ENCODE measurements at regions of chr21 and their contacts with region 1.

Region 1: GRCh38 chr21:16419188-16419921 is 689.6 kb downstream of the USP25 start:
- DNase-seq: peak; percentile 99
- H3K4me3 ChIP-seq: peak overlapping the region; percentile 34 to 100 (median 57)
- H3K27ac ChIP-seq: peak overlapping the region; percentile 85
- H3K4me1 ChIP-seq: peaks cover 26% of the 10 kb centered on the region
- H3K27me3 ChIP-seq: no peaks in the 10 kb centered on the region
- CTCF ChIP-seq: no peak
- POLR2A ChIP-seq: peak; percentile 76

Region 2: GRCh38 chr21:15848632-15849031 is 570.7 kb before region 1 on chr21:
- CTCF ChIA-PET with region 1: no interaction called
- POLR2A ChIA-PET with region 1: no interaction called
- dilution Hi-C with region 1: no loop called
- intact Hi-C with region 1: loop called (anchors 2 kb)
- DNase-seq: peak; percentile 92
- H3K4me3 ChIP-seq: no peak overlapping the region
- H3K27ac ChIP-seq: peak overlapping the region; percentile 69
- H3K4me1 ChIP-seq: peaks cover 56% of the 10 kb centered on the region
- H3K27me3 ChIP-seq: no peaks in the 10 kb centered on the region
- CTCF ChIP-seq: no peak
- POLR2A ChIP-seq: peak; percentile 48

Region 3: GRCh38 chr21:16082038-16082816 is 337.1 kb before region 1 on chr21:
- CTCF ChIA-PET with region 1: interaction called, 10 read pairs
- POLR2A ChIA-PET with region 1: no interaction called
- dilution Hi-C with region 1: no loop called
- intact Hi-C with region 1: loop called (anchors 2 kb)
- DNase-seq: peak; percentile 78
- H3K4me3 ChIP-seq: no peak overlapping the region
- H3K27ac ChIP-seq: peak overlapping the region; percentile 48
- H3K4me1 ChIP-seq: peaks cover 8% of the 10 kb centered on the region
- H3K27me3 ChIP-seq: no peaks in the 10 kb centered on the region
- CTCF ChIP-seq: peak in 1 of 2 donors; percentile 4
- POLR2A ChIP-seq: no peak

Region 4: DNA sequence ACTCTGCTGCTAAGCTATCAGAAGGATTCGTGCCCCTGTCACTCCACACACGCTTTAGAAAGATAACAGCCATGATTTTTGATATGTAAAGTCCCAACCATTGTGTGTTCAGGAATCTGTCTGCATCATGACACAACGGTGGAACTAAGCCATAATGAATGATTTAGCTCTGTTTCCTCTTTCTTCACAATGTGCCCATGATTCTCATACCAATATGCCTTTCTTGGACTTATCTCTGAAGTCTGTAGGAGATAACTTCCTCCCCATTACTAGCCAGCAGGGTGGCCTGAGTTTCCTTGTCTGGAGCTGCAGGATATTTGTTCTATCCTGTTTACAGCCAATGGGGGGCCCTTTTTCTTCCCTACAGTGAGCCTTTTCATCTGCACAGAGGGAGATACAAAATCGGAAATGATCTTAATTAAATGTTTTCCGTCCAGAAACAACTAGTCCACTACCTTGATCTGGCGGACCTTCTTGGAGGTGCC is 177.8 kb before region 1 on chr21:
- CTCF ChIA-PET with region 1: interaction called, 3 read pairs
- POLR2A ChIA-PET with region 1: no interaction called
- dilution Hi-C with region 1: no loop called
- intact Hi-C with region 1: loop called (anchors 2 kb)
- DNase-seq: peak; percentile 98
- H3K4me3 ChIP-seq: peak overlapping the region in 1 of 3 experiments; percentile 38
- H3K27ac ChIP-seq: peak overlapping the region; percentile 73
- H3K4me1 ChIP-seq: peaks cover 22% of the 10 kb centered on the region
- H3K27me3 ChIP-seq: no peaks in the 10 kb centered on the region
- CTCF ChIP-seq: no peak
- POLR2A ChIP-seq: peak; percentile 44

Region 5: GRCh38 chr21:16330082-16330907 is 89.1 kb before region 1 on chr21:
- CTCF ChIA-PET with region 1: interaction called, 4 read pairs
- POLR2A ChIA-PET with region 1: no interaction called
- dilution Hi-C with region 1: no loop called
- intact Hi-C with region 1: loop called (anchors 2 kb)
- DNase-seq: peak; percentile 87
- H3K4me3 ChIP-seq: no peak overlapping the region
- H3K27ac ChIP-seq: no peak overlapping the region
- H3K4me1 ChIP-seq: no peaks in the 10 kb centered on the region
- H3K27me3 ChIP-seq: no peaks in the 10 kb centered on the region
- CTCF ChIP-seq: peak; percentile 51 to 56
- POLR2A ChIP-seq: no peak

Region 6: GRCh38 chr21:16588433-16588860 is 169.1 kb after region 1 on chr21:
- CTCF ChIA-PET with region 1: interaction called, 3 read pairs
- POLR2A ChIA-PET with region 1: no interaction called
- dilution Hi-C with region 1: no loop called
- intact Hi-C with region 1: loop called (anchors 2 kb)
- DNase-seq: no peak
- H3K4me3 ChIP-seq: peak overlapping the region in 1 of 3 experiments; percentile 40
- H3K27ac ChIP-seq: peak overlapping the region; percentile 74
- H3K4me1 ChIP-seq: peaks cover 32% of the 10 kb centered on the region
- H3K27me3 ChIP-seq: no peaks in the 10 kb centered on the region
- CTCF ChIP-seq: no peak
- POLR2A ChIP-seq: no peak

Measured in endothelial cell of umbilical vein (primary cell).